Activated CD4-positive, alpha-beta T cell treated with anti-CD3 and anti-CD28 coated beads, Interleukin-2, amount 10 ng/mL, durations not matched to agents 7 days and 5 days (primary cell): ENCODE measurements at regions of chr1 and their contacts with region 1.

Region 1: DNA sequence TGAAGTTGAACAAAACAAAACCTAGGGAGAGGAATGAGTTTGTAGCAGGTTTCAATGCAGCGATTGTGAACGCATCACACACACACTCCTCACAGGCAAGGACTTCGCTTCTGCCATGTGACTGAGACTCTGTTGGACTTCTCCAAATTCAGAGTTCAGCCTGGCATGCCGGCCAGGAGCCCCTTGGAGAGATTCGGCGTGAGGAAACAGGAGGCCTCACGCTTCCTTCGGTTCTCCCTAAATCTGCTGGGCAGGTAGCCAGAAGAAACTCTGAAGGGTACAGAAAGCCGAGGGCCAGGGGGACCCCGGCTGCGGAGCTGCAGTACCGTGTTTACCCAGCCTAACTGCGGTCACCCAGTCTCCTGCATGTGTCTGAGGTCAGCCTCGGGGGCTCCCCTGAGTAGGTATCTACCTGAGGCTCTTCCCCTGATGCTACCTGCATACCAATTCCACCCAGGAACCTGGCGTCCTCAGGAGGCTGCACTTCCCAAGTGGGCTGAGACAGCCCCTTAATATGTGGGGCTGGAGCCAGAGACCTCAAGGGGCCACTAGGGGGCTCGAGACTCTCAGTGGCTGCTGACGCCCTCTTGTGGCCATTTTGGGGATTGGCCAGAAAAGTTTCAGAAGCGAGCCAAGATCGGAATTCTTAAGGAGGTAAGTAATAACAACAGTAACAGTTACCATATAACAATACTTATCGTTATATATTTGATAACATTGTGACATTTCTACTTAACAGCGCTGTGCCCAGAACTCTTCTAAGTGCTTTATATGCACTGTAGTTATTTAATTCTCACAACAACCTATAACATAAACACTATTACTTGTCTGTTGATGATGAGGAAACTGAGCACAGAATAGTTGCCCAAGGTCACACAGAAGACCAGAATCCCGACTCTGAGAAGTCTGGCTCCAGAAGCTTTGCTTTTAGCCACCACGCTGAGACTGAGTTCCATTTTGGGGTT is 2.7 kb upstream of the ANXA9 start:
- DNase-seq: peak; percentile 93
- H3K4me3 Mint-ChIP-seq: peak overlapping the region; percentile 19
- H3K27ac Mint-ChIP-seq: peak overlapping the region; percentile 54
- H3K4me1 Mint-ChIP-seq: peaks cover 42% of the 10 kb centered on the region
- H3K27me3 Mint-ChIP-seq: no peaks in the 10 kb centered on the region

Region 2: DNA sequence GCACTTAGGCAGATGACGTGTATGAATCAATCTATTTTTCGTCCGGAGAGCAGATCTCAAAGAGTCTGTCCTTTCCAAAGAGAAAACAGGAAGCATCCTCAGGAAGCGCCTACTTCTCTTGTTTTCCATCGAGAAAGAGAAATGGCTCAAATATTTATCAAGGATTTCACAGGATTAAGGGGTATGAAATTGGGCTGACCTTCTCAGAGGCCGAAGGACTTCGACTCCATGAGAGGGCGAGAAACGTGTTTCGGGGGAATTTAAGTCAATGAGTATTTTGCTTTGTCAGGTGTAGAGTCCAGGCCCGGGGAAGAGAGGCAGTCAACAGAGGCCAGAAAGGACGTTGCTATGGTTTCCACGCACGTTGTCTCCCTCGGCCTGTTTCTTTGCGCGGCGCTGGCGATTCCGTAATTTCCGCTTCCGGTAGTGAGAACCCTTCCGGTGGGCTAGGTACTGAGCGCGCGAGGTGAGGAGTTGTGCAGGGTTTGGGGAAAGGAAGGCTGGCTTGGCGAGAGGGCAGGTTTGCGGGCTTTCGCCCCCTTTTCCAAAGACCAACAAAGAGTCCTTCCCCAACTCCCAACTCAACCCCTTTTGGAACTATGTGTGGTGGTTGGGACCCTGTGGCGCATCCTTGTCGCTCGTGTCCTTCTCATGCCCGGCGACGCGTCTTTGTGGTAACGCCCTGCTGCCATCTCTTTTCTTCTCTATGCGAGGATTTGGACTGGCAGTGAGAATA is 685.8 kb before region 1 on chr1 and contains the start of gene MRPS21:
- CTCF ChIA-PET with region 1: no interaction called
- POLR2A ChIA-PET with region 1: no interaction called
- DNase-seq: peak; percentile 92
- H3K4me3 Mint-ChIP-seq: peak within 1 kb of the TSS; percentile 96
- H3K27ac Mint-ChIP-seq: peak within 1 kb of the TSS; percentile 90
- H3K4me1 Mint-ChIP-seq: peaks cover 35% of the 10 kb centered on the region
- H3K27me3 Mint-ChIP-seq: no peaks in the 10 kb centered on the region
- total RNA-seq, gene MRPS21: 69.6 to 72.9 TPM

Region 3: GRCh38 chr1:150683914-150684313 is 295.5 kb before region 1 on chr1:
- CTCF ChIA-PET with region 1: no interaction called
- POLR2A ChIA-PET with region 1: no interaction called
- DNase-seq: no peak
- H3K4me3 Mint-ChIP-seq: no peak overlapping the region
- H3K27ac Mint-ChIP-seq: no peak overlapping the region
- H3K4me1 Mint-ChIP-seq: peaks cover 10% of the 10 kb centered on the region
- H3K27me3 Mint-ChIP-seq: no peaks in the 10 kb centered on the region

Region 4: DNA sequence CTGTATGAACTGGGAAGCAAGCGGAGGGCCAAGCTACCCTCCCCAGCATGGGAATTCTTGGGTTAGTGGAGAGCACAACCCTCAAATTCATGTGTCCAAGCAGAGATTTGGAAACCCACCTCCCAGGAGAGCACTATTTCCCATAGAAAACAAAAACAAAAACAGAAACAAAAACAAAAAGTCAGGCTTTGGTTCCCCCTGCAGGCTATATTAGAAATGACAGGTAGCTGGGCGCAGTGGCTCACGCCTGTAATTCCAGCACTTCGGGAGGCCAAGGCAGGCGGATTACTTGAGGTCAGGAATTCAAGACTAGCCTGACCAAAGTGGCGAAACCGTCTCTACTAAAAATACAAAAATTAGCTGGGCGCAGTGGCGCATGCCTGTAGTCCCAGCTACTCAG is 16.5 kb after region 1 on chr1:
- CTCF ChIA-PET with region 1: interaction called, 61 read pairs
- POLR2A ChIA-PET with region 1: interaction called, 6 read pairs
- DNase-seq: peak; percentile 46
- H3K4me3 Mint-ChIP-seq: no peak overlapping the region
- H3K27ac Mint-ChIP-seq: no peak overlapping the region
- H3K4me1 Mint-ChIP-seq: peaks cover 21% of the 10 kb centered on the region
- H3K27me3 Mint-ChIP-seq: no peaks in the 10 kb centered on the region